ENCODE measurements at regions of chr6 and their contacts with region 1.

Region 1: DNA sequence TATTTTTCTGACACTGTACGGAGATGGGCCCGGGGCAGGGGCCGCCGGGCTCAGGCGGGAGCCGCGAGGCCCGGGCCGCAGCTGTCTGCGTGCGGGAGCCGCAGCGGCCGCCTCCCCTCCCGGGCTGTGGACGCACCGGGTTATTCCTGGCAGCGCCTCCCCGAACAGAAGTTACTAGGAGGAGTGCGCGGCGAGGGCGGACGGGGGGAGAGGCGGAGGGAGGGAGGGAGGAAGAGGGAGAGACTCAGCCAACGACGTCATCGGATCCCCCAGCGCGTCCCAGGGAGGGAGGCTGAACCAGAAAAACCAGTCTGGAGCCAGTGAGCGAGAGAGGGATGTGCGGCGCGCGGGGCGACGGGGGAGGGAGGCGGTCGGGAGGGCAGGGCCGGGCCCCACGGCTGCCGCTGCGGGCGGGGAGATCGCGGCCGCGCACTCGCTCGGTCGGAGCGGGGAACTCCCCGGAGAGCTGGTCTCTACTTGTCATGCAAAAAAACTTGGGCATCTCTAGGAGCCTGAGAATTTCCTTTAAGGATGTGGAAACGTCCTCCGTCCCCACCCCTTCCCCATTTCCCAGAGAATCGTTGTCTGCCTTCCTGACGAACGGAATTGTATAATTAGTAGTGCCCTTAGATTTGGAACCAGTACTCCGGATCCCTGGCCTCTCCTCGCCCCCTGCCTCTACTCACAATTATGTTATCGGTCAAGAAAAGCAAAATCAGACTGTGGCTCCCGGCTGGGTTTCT is 1.4 kb upstream of the HIVEP2 start:
- DNase-seq: peak; percentile 95
- H3K4me3 Mint-ChIP-seq: peak overlapping the region; percentile 93
- H3K27ac Mint-ChIP-seq: peak overlapping the region; percentile 97
- H3K4me1 Mint-ChIP-seq: peaks cover 42% of the 10 kb centered on the region
- H3K27me3 Mint-ChIP-seq: peaks cover 3% of the 10 kb centered on the region

Region 2: GRCh38 chr6:142692942-142693341 is 253.4 kb before region 1 on chr6:
- intact Hi-C with region 1: loop called (anchors 2 kb)
- DNase-seq: peak; percentile 88
- H3K4me3 Mint-ChIP-seq: no peak overlapping the region
- H3K27ac Mint-ChIP-seq: peak overlapping the region; percentile 2
- H3K4me1 Mint-ChIP-seq: peaks cover 15% of the 10 kb centered on the region
- H3K27me3 Mint-ChIP-seq: no peaks in the 10 kb centered on the region

Region 3: DNA sequence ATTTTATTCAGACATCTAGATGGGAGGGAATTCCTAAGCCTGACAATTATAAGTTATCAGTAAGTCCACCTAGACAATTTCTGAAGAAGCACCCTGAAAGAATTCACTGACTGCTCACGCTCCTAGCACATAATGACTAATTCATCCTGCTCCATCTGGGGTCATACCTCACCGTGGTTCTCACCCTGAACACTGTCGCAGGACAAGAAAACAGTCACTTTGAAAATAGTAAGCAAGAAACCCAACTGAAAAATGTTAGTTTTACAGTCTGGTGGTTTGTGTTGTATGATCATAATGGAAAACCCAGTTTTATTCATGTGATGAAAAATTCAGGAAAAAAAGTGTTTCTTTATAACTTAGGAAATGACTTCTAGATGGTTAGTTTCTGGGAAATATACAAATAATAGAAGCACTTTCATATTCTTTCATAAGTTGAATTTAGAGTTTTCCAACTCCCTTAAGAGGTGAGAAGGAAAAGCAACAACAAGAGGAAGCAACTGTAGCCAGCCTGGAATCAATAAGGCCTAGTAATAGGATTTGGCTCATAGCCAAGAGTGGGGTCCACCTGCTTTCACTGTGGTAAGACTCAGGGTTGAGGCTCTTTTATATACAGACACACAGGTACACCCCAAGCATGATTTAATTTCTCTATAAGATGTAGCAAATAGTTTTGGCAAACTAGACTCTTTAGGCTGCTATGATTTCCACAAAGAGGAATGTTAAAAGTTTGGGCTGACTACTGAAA is 95.5 kb before region 1 on chr6:
- intact Hi-C with region 1: loop called (anchors 2 kb)
- DNase-seq: peak; percentile 74
- H3K4me3 Mint-ChIP-seq: peak overlapping the region; percentile 70
- H3K27ac Mint-ChIP-seq: peak overlapping the region; percentile 87
- H3K4me1 Mint-ChIP-seq: peaks cover 83% of the 10 kb centered on the region
- H3K27me3 Mint-ChIP-seq: no peaks in the 10 kb centered on the region

Region 4: GRCh38 chr6:142926494-142927270 is 19.7 kb before region 1 on chr6:
- intact Hi-C with region 1: loop called (anchors 1 kb)
- DNase-seq: peak; percentile 94
- H3K4me3 Mint-ChIP-seq: peak overlapping the region; percentile 95
- H3K27ac Mint-ChIP-seq: peak overlapping the region; percentile 92
- H3K4me1 Mint-ChIP-seq: peaks cover 43% of the 10 kb centered on the region
- H3K27me3 Mint-ChIP-seq: no peaks in the 10 kb centered on the region

Region 5: GRCh38 chr6:142993977-142994376 is 47.6 kb after region 1 on chr6:
- intact Hi-C with region 1: no loop called
- DNase-seq: no peak
- H3K4me3 Mint-ChIP-seq: no peak overlapping the region
- H3K27ac Mint-ChIP-seq: no peak overlapping the region
- H3K4me1 Mint-ChIP-seq: peaks cover 3% of the 10 kb centered on the region
- H3K27me3 Mint-ChIP-seq: peaks cover 6% of the 10 kb centered on the region

Region 6: GRCh38 chr6:143136647-143137046 is 190.3 kb after region 1 on chr6:
- intact Hi-C with region 1: loop called (anchors 5 kb)
- DNase-seq: no peak
- H3K4me3 Mint-ChIP-seq: no peak overlapping the region
- H3K27ac Mint-ChIP-seq: peak overlapping the region; percentile 76
- H3K4me1 Mint-ChIP-seq: peaks cover 21% of the 10 kb centered on the region
- H3K27me3 Mint-ChIP-seq: no peaks in the 10 kb centered on the region

Region 7: DNA sequence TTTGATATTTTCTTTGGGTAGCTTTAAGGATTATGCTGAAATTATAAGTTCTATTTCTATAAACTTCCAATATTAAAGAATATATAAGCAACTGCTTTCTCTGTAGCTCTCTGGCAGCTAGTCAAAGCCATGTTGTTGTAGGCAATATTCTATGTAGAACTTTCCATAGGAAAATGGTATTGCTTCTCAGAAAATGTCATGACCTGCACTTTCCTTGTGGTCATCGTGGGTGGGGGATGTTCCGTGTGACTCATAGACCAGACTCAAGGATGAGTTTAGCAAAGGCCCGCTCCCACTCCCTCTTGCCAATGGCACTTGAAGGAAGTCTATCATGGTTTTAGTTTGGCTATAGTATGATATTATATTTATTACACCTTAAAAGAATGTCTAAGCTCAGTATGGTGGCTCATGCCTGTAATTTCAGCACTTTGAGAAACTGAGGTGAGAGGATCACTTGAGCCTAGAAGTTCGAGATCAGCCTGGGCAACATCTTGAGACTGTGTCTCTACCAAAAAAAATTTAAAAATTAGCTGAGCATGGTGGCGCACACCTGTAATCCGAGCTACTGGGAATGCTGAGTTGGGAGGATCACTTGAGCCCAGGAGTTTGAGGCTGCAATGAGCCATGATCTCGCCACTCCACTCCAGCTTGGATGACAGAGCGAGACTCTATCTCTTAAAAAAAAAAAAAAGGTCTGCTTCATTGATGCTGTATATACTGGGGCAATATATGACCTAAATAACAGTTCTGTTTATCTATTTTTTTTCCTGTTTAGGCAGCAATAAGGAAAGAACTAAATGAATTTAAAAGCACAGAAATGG is 860.1 kb after region 1 on chr6:
- intact Hi-C with region 1: loop called (anchors 10 kb)
- DNase-seq: peak; percentile 84
- H3K4me3 Mint-ChIP-seq: peak overlapping the region; percentile 62
- H3K27ac Mint-ChIP-seq: peak overlapping the region; percentile 91
- H3K4me1 Mint-ChIP-seq: peaks cover 46% of the 10 kb centered on the region
- H3K27me3 Mint-ChIP-seq: peaks cover 2% of the 10 kb centered on the region